ENCODE measurements at regions of chr13 and their contacts with region 1.

Region 1: GRCh38 chr13:27449936-27450828 is at the start of gene MTIF3:
- DNase-seq: peak; percentile 95
- H3K27ac ChIP-seq: peak within 1 kb of the TSS; percentile 99
- CTCF ChIP-seq: no peak

Region 2: GRCh38 chr13:27424246-27425157 is 25.7 kb before region 1 on chr13 and contains the start of gene GTF3A:
- CTCF ChIA-PET with region 1: interaction called, 9 read pairs
- POLR2A ChIA-PET with region 1: interaction called, 10 read pairs
- DNase-seq: peak; percentile 93
- H3K27ac ChIP-seq: peak within 1 kb of the TSS; percentile 93
- CTCF ChIP-seq: no peak

Region 3: GRCh38 chr13:27607125-27607524 is 156.9 kb after region 1 on chr13:
- CTCF ChIA-PET with region 1: no interaction called
- POLR2A ChIA-PET with region 1: no interaction called
- DNase-seq: peak; percentile 29
- H3K27ac ChIP-seq: no peak overlapping the region
- CTCF ChIP-seq: no peak

Measured in RWPE1 (cell line).